ENCODE measurements at regions of chr7 and their contacts with region 1.

Region 1: DNA sequence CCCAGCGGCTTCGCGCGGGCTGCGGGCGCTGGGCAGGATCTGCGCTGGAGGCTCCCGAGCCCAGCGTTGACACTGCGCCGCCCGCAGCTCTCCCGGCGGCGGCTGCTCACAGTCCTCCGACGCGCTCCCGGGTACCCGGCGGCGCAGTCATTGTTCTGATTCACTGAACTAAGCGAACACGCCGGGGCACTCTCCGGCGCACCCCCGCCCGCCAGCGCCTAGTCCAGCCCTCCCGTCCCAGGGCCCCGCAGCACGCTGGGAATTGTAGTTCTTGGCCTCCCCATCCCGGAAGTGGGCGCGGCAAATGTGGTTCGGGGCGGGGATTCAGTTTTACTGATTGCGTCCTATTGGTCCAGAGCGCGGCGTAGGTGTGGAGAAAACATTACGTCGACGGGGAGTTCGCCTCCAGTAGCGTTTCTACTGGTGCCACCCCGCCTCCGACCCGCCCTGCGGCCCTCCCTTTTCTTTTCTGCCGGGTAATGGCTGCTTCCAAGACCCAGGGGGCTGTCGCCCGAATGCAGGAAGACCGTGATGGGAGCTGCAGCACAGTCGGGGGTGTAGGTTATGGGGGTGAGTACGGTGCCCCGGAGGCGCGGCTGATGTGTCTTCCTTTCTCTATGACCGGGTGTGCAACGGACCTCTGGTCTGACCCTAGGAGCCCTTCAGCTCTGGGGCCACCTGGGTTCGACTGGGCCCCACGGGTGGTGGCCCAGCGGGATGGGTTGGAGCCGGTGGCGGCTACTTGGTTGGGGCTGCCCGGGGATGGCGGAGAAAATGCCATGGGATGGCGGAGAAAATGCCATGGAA is at the starts of genes DOCK4 and ZNF277:
- DNase-seq: peak; percentile 97
- H3K4me3 ChIP-seq: peak within 1 kb of the TSS; percentile 96
- H3K27ac ChIP-seq: peak within 1 kb of the TSS; percentile 77
- H3K27me3 ChIP-seq: no peaks in the 10 kb centered on the region
- CTCF ChIP-seq: no peak; the same call in 1 of the 2 replicates
- polyA plus RNA-seq, gene DOCK4: 9.9 and 12.6 TPM in 2 replicates
- polyA plus RNA-seq, gene ZNF277: 18.8 and 30.3 TPM in 2 replicates

Region 2: DNA sequence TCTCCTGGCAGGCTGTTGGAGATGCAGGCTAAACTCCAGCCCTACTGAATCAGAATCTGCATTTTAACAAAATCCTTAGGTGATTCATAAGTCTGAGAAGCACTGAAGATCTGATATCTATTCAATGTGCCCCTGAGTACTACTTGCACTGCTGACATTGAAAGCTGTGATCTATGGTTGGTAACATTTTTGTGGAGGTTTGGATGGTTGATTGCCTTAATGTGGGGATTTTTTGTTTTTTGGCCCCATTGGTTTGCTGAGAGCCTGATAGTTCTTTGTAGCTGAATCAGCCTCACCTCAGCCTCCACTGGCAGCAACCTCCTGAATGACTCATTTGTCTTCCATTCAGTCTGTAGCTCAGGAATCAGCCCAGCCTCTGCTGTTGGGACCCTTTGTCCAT is 1130.2 kb before region 1 on chr7:
- CTCF ChIA-PET with region 1: no interaction called
- POLR2A ChIA-PET with region 1: no interaction called
- DNase-seq: no peak
- H3K4me3 ChIP-seq: no peak overlapping the region
- H3K27ac ChIP-seq: no peak overlapping the region
- H3K27me3 ChIP-seq: no peaks in the 10 kb centered on the region
- CTCF ChIP-seq: no peak

Region 3: DNA sequence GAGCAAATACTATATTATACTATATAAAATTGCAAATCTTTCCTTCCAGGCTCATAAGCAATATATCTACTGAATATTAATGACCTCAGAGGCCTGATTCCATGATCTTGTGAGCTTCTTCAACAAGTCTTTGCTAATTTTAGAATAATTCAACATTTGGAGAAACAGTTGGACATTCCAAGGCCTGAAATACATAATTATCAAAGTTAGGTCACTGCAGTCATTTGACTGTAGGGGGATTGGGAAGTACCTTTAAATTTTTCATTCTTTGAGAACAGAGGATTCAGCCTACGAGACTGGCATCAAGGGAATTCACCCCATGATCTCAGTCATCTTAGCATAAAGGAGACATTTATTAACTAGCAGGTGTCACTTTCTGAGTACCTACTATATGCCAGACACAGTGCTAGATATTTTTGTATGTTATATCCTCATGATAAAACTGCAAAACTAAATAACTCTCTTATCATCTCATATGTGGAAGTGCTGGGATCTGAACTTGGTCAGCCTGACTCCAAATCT is 85.7 kb before region 1 on chr7:
- CTCF ChIA-PET with region 1: no interaction called
- POLR2A ChIA-PET with region 1: no interaction called
- DNase-seq: no peak
- H3K4me3 ChIP-seq: no peak overlapping the region
- H3K27ac ChIP-seq: no peak overlapping the region
- H3K27me3 ChIP-seq: no peaks in the 10 kb centered on the region
- CTCF ChIP-seq: no peak

Region 4: GRCh38 chr7:112143582-112143981 is 62.9 kb before region 1 on chr7:
- CTCF ChIA-PET with region 1: no interaction called
- POLR2A ChIA-PET with region 1: interaction called, 18 read pairs
- DNase-seq: peak; percentile 81
- H3K4me3 ChIP-seq: no peak overlapping the region
- H3K27ac ChIP-seq: peak overlapping the region; percentile 58
- H3K27me3 ChIP-seq: no peaks in the 10 kb centered on the region
- CTCF ChIP-seq: no peak

Region 5: GRCh38 chr7:112286250-112287086 is 80.0 kb after region 1 on chr7:
- CTCF ChIA-PET with region 1: no interaction called
- POLR2A ChIA-PET with region 1: no interaction called
- DNase-seq: no peak
- H3K4me3 ChIP-seq: no peak overlapping the region
- H3K27ac ChIP-seq: no peak overlapping the region
- H3K27me3 ChIP-seq: no peaks in the 10 kb centered on the region
- CTCF ChIP-seq: no peak

Region 6: GRCh38 chr7:112715525-112715924 is 509.1 kb after region 1 on chr7:
- CTCF ChIA-PET with region 1: no interaction called
- POLR2A ChIA-PET with region 1: no interaction called
- DNase-seq: no peak
- H3K4me3 ChIP-seq: no peak overlapping the region
- H3K27ac ChIP-seq: no peak overlapping the region
- H3K27me3 ChIP-seq: no peaks in the 10 kb centered on the region
- CTCF ChIP-seq: no peak